Activated B cell treated with CpG ODN at 0.5 μM for 24 hours (primary cell): ENCODE measurements at regions of chr5 and their contacts with region 1.

Region 1: GRCh38 chr5:157142317-157143126 is at the start of gene MED7:
- DNase-seq: peak; percentile 75
- ATAC-seq: peak; percentile 97
- H3K4me3 Mint-ChIP-seq: peak within 1 kb of the TSS; percentile 99
- H3K27ac Mint-ChIP-seq: peak within 1 kb of the TSS; percentile 99
- H3K4me1 Mint-ChIP-seq: peaks cover 45% of the 10 kb centered on the region
- H3K27me3 Mint-ChIP-seq: no peaks in the 10 kb centered on the region
- CTCF ChIP-seq: no peak
- total RNA-seq, gene MED7: 14.0 and 16.1 TPM in 2 replicates

Region 2: GRCh38 chr5:156402387-156402921 is 740.1 kb before region 1 on chr5:
- CTCF ChIA-PET with region 1: no interaction called
- POLR2A ChIA-PET with region 1: interaction called, 3 read pairs
- intact Hi-C with region 1: loop called (anchors 2 kb)
- DNase-seq: peak; percentile 52
- ATAC-seq: peak; percentile 85
- H3K4me3 Mint-ChIP-seq: peak overlapping the region; percentile 66
- H3K27ac Mint-ChIP-seq: peak overlapping the region; percentile 88
- H3K4me1 Mint-ChIP-seq: peaks cover 18% of the 10 kb centered on the region
- H3K27me3 Mint-ChIP-seq: no peaks in the 10 kb centered on the region
- CTCF ChIP-seq: no peak

Region 3: DNA sequence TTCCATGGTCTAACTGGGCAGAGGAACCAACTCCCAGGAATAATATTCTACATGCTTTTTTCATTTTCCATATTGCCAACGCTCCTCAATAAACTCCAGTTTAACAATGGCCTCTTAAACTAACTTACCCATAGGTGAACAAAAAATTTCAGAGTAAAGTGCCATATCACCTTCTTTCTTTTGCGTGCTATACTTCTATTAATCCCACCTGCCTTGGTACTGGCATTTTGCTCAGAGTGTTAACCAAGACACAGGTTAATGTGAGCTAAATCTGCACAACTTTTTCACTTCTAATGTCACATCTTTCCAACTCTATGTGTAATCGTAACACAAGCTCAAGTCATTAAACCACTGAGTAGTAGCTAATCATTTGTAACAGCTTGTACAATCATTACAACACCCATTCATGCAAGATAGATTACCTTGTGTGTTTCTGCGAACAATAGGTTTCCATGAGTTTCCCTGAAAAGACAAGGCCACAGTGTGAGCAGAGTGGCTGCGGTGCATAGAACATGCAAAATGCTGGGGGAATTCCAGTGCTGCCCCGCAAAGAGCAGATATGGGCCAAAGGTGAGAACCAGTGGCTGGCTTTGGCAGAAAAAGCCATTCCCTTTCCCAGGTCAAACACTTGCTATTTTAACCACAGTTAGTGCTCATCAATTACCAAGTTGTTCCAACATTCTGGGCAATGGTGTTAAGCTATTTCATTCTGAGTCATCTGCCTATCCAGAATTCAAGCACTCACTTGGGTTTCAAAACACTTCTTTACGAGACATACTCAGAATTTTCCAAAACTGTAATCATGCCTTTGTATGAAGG is 222.3 kb before region 1 on chr5:
- CTCF ChIA-PET with region 1: no interaction called
- POLR2A ChIA-PET with region 1: no interaction called
- intact Hi-C with region 1: no loop called
- DNase-seq: no peak
- ATAC-seq: no peak
- H3K4me3 Mint-ChIP-seq: no peak overlapping the region
- H3K27ac Mint-ChIP-seq: no peak overlapping the region
- H3K4me1 Mint-ChIP-seq: peaks cover 26% of the 10 kb centered on the region
- H3K27me3 Mint-ChIP-seq: no peaks in the 10 kb centered on the region
- CTCF ChIP-seq: no peak

Region 4: DNA sequence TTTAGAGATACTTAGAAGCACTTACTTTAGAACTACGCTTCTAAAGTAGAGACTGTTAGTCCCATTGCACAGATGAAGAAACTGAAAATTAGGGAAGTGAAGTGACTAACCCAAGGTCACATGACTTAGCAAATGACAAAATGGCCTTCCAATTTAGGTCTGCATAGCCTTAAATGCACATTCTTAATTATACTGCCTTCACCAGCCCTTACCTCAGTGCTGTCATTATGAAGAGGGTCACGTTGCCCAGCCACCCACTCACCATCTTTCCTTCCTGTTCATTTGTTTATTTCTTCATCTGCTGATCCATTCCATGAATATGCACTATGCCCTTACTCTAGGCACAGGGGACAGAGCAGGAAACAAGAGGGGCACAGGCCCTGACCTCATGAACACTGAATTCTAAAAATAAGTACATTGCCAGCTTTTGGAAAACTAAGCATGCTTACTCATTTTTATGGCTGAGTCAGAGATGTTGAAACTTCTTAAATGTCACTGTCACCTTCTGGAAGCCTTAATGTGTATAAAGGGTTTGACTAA is 42.3 kb before region 1 on chr5:
- CTCF ChIA-PET with region 1: no interaction called
- POLR2A ChIA-PET with region 1: no interaction called
- intact Hi-C with region 1: no loop called
- DNase-seq: no peak
- ATAC-seq: no peak
- H3K4me3 Mint-ChIP-seq: no peak overlapping the region
- H3K27ac Mint-ChIP-seq: no peak overlapping the region
- H3K4me1 Mint-ChIP-seq: peaks cover 3% of the 10 kb centered on the region
- H3K27me3 Mint-ChIP-seq: no peaks in the 10 kb centered on the region
- CTCF ChIP-seq: no peak

Region 5: GRCh38 chr5:157130925-157131324 is 11.6 kb before region 1 on chr5:
- CTCF ChIA-PET with region 1: interaction called, 7 read pairs
- POLR2A ChIA-PET with region 1: interaction called, 11 read pairs
- intact Hi-C with region 1: no loop called
- DNase-seq: no peak
- ATAC-seq: peak; percentile 62
- H3K4me3 Mint-ChIP-seq: no peak overlapping the region
- H3K27ac Mint-ChIP-seq: no peak overlapping the region
- H3K4me1 Mint-ChIP-seq: peaks cover 10% of the 10 kb centered on the region
- H3K27me3 Mint-ChIP-seq: no peaks in the 10 kb centered on the region
- CTCF ChIP-seq: no peak

Region 6: DNA sequence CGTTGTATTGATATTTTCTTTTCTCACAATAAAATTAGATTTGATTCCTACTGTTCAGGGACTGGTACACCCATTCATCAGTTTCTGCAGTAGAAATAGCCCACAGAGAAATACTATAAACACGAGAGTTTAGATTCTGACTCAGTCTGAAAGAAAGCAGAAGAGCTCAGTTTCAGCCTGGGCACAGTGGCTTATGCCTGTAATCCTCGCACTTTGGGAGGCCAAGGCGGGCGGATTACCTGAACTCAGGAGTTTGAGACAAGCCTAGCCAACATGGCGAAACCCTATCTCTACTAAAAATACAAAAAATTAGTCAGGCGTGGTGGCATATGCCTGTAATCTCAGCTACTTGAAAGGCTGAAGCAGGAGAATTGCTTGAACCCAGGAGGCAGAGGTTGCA is 46.7 kb after region 1 on chr5:
- CTCF ChIA-PET with region 1: no interaction called
- POLR2A ChIA-PET with region 1: no interaction called
- intact Hi-C with region 1: no loop called
- DNase-seq: no peak
- ATAC-seq: no peak
- H3K4me3 Mint-ChIP-seq: no peak overlapping the region
- H3K27ac Mint-ChIP-seq: no peak overlapping the region
- H3K4me1 Mint-ChIP-seq: no peaks in the 10 kb centered on the region
- H3K27me3 Mint-ChIP-seq: peaks cover 4% of the 10 kb centered on the region
- CTCF ChIP-seq: no peak

Region 7: DNA sequence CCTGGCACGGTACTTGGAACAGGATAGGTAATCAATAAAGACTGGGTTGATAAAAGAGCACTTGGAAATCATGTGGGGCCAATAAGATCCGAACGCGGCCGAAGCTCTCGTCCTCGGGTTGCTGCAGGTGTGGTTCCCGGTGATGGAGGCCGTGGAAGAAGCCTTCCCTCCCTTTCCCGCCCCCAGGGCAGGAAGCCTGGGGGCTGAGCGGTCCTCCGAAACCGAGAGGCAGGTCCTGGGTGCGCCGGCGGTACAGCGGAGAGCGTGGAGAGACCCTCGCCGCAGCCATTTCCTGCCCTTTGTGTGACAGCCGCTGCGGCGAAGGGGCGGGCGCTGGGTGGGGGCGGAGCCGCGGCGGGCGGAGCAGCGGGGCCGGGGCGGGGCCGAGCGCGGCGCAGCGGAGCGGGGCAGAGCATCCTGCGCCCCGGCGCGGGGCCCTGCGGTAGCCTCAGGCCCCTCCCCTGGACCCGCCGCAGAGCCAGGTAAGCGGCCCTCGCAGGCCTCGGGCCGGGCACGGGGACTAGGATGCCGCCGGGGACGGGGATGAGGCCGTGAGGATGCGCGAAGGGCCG is 123.3 kb after region 1 on chr5 and contains the start of gene CYFIP2:
- CTCF ChIA-PET with region 1: no interaction called
- POLR2A ChIA-PET with region 1: interaction called, 15 read pairs
- intact Hi-C with region 1: loop called (anchors 1 kb)
- DNase-seq: peak; percentile 76
- ATAC-seq: peak; percentile 90
- H3K4me3 Mint-ChIP-seq: peak within 1 kb of the TSS; percentile 97
- H3K27ac Mint-ChIP-seq: peak within 1 kb of the TSS; percentile 99
- H3K4me1 Mint-ChIP-seq: peaks cover 69% of the 10 kb centered on the region
- H3K27me3 Mint-ChIP-seq: no peaks in the 10 kb centered on the region
- CTCF ChIP-seq: no peak
- total RNA-seq, gene CYFIP2: 385 and 471 TPM in 2 replicates

Region 8: GRCh38 chr5:157312492-157312891 is 170.0 kb after region 1 on chr5:
- CTCF ChIA-PET with region 1: interaction called, 24 read pairs
- POLR2A ChIA-PET with region 1: interaction called, 16 read pairs
- intact Hi-C with region 1: no loop called
- DNase-seq: no peak
- ATAC-seq: peak; percentile 77
- H3K4me3 Mint-ChIP-seq: no peak overlapping the region
- H3K27ac Mint-ChIP-seq: peak overlapping the region; percentile 77
- H3K4me1 Mint-ChIP-seq: peaks cover 35% of the 10 kb centered on the region
- H3K27me3 Mint-ChIP-seq: no peaks in the 10 kb centered on the region
- CTCF ChIP-seq: peak; percentile 42